Heart right ventricle (tissue), 16 donors: ENCODE measurements at regions of chr12 and their contacts with region 1.

Region 1: DNA sequence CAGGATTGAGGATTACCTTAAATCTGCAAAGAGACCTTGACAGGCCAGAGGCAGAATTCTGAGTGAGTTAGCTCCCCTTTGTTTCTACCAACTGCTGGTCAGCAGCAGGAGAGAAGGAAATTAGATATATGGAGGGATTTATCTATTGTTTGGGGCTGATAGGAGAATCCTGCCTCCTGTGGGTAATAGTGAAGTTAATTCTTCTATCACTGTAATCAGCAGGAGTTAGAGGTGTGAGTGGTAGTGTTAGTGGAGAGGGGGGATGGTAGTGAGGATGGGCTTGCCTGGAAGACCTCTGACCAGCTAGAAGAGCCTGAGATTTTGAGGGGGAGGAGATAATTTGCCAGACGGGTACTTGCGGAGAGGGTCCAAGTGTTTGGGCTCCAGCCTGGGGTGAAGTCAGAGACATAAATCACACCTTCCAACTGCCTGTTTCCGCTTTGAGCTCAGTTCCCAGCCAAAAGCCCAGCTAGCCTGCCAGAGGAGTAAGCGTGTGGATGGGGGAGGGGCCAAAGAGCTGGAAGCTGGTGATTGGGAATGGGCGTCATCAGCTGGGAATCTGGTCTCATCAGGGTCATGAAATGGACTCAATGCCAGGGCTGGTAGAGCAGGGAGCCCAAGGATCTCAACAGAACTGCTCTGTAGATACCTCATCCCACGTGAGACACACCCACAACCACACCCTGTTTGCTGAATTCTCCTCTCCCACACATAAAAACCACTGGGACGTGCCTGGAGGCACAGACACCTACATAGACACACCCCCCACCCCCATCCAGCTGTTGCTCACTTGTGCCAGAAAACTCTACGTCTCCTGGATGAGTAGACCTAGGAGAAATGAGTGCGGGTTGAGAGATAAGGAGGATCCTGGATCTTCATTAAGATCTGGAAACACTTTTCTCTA is 13.1 kb upstream of the ITGA5 start:
- DNase-seq: peak; percentile 68 to 88
- ATAC-seq: peak; percentile 65 to 89 (median 85)
- H3K4me3 ChIP-seq: peak overlapping the region in 1 of 10 donors; percentile 1
- H3K27ac ChIP-seq: peak overlapping the region; percentile 64 to 86 (median 82)
- H3K4me1 ChIP-seq: peaks cover 25 to 68% (median 54%) of the 10 kb centered on the region in 9 donors
- H3K27me3 ChIP-seq: no peaks in the 10 kb centered on the region
- CTCF ChIP-seq: peak in 1 of 9 donors; percentile 16

Region 2: GRCh38 chr12:54419088-54419892 is 12.9 kb before region 1 on chr12 and contains the start of gene ITGA5:
- intact Hi-C with region 1: loop called in 2 of 10 experiments (anchors 2 kb)
- DNase-seq: peak; percentile 82 to 86
- ATAC-seq: peak; percentile 78 to 89 (median 86)
- H3K4me3 ChIP-seq: peak within 1 kb of the TSS; percentile 44 to 97 (median 94)
- H3K27ac ChIP-seq: peak within 1 kb of the TSS; percentile 77 to 98 (median 96)
- H3K4me1 ChIP-seq: peaks cover 16 to 83% (median 64%) of the 10 kb centered on the region in 9 donors
- H3K27me3 ChIP-seq: no peaks in the 10 kb centered on the region
- CTCF ChIP-seq: no peak
- total RNA-seq, gene ITGA5: 35.7 to 86.1 (median 48.8) TPM

Region 3: GRCh38 chr12:54497883-54498282 is 65.7 kb after region 1 on chr12:
- intact Hi-C with region 1: no loop called
- DNase-seq: no peak
- ATAC-seq: peak in 3 of 8 donors; percentile 11 to 50 (median 13)
- H3K4me3 ChIP-seq: peak overlapping the region in 8 of 10 donors; percentile 7 to 68 (median 34)
- H3K27ac ChIP-seq: peak overlapping the region in 4 of 10 donors; percentile 16 to 91 (median 32)
- H3K4me1 ChIP-seq: peaks cover 0 to 40% (median 0%) of the 10 kb centered on the region in 9 donors
- H3K27me3 ChIP-seq: peaks cover 0 to 4% (median 0%) of the 10 kb centered on the region in 7 donors
- CTCF ChIP-seq: peak in 1 of 9 donors; percentile 2